ENCODE measurements at regions of chr14 and their contacts with region 1.

Region 1: DNA sequence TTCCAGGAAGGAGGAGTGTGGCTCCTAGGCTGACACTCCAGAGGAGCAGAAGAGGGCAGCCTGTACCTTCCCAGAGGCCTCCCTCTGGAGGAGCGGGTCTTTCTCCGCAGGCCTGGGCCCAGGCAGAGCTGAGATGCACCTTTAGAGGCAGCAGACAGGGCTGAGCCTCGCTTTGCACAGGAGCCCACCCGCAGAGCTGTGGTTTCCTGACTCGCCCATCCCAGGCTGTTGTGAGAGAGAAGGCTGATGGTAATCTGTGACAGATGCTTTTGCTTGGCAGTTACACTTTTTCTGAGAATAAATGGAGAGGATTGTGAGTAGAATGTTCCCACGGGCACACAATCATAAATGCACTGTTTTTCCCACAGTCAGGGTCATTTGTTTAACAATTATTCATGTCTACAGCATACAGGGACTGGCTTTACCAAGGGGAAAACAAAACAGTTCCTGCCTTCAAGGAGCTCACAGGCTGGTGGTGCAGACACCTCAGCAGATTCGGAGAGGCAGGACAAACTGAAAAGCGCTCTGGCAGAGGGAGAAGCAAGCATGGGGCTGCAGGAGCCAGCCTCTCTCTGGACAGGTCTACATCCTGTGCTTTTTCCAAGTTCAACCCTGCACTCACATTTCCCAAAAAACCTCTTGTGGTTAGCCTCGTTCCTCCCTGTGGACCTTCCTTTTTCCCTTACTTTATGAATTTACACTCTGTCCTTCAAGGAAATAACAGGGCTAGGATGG is 13.9 kb downstream of the EVL start:
- DNase-seq: peak; percentile 87 to 96 (median 88)
- H3K4me3 ChIP-seq: peak overlapping the region; percentile 41 to 52
- H3K4me3 Mint-ChIP-seq: peak overlapping the region; percentile 83 to 88 (median 86)
- H3K27ac ChIP-seq: peak overlapping the region; percentile 62
- H3K27ac Mint-ChIP-seq: peak overlapping the region; percentile 91 to 99 (median 95)
- H3K4me1 ChIP-seq: peaks cover 100% of the 10 kb centered on the region
- H3K4me1 Mint-ChIP-seq: peaks cover 81 to 100% (median 92%) of the 10 kb centered on the region in 4 donors
- H3K27me3 ChIP-seq: no peaks in the 10 kb centered on the region
- H3K27me3 Mint-ChIP-seq: no peaks in the 10 kb centered on the region

Region 2: GRCh38 chr14:100056964-100057795 is 22.0 kb before region 1 on chr14:
- CTCF ChIA-PET with region 1: interaction called, 1,350 read pairs
- POLR2A ChIA-PET with region 1: interaction called, 1,011 read pairs
- intact Hi-C with region 1: loop called (anchors 2 kb)
- DNase-seq: peak; percentile 61 to 71 (median 66)
- H3K4me3 ChIP-seq: no peak overlapping the region
- H3K4me3 Mint-ChIP-seq: peak overlapping the region; percentile 20 to 80 (median 40)
- H3K27ac ChIP-seq: peak overlapping the region; percentile 3
- H3K27ac Mint-ChIP-seq: peak overlapping the region; percentile 80 to 95 (median 92)
- H3K4me1 ChIP-seq: peaks cover 56% of the 10 kb centered on the region
- H3K4me1 Mint-ChIP-seq: peaks cover 37 to 58% (median 46%) of the 10 kb centered on the region in 4 donors
- H3K27me3 ChIP-seq: no peaks in the 10 kb centered on the region
- H3K27me3 Mint-ChIP-seq: no peaks in the 10 kb centered on the region

Region 3: GRCh38 chr14:100147181-100147631 is 68.0 kb after region 1 on chr14:
- CTCF ChIA-PET with region 1: no interaction called
- POLR2A ChIA-PET with region 1: interaction called, 20 read pairs
- intact Hi-C with region 1: no loop called
- DNase-seq: peak; percentile 61 to 82 (median 73)
- H3K4me3 ChIP-seq: no peak overlapping the region
- H3K4me3 Mint-ChIP-seq: peak overlapping the region; percentile 54 to 79 (median 74)
- H3K27ac ChIP-seq: no peak overlapping the region
- H3K27ac Mint-ChIP-seq: peak overlapping the region; percentile 73 to 96 (median 88)
- H3K4me1 ChIP-seq: peaks cover 28% of the 10 kb centered on the region
- H3K4me1 Mint-ChIP-seq: peaks cover 7 to 36% (median 20%) of the 10 kb centered on the region in 4 donors
- H3K27me3 ChIP-seq: no peaks in the 10 kb centered on the region
- H3K27me3 Mint-ChIP-seq: no peaks in the 10 kb centered on the region